ENCODE measurements at regions of chr2 and their contacts with region 1.

Region 1: GRCh38 chr2:74250189-74250631 is 51.8 kb downstream of the MTHFD2 start:
- DNase-seq: no peak
- ATAC-seq: peak; percentile 30
- H3K4me3 ChIP-seq: no peak overlapping the region
- H3K27ac ChIP-seq: no peak overlapping the region
- H3K4me1 ChIP-seq: peaks cover 0 to 6% of the 10 kb centered on the region in 2 donors
- H3K27me3 ChIP-seq: no peaks in the 10 kb centered on the region

Region 2: DNA sequence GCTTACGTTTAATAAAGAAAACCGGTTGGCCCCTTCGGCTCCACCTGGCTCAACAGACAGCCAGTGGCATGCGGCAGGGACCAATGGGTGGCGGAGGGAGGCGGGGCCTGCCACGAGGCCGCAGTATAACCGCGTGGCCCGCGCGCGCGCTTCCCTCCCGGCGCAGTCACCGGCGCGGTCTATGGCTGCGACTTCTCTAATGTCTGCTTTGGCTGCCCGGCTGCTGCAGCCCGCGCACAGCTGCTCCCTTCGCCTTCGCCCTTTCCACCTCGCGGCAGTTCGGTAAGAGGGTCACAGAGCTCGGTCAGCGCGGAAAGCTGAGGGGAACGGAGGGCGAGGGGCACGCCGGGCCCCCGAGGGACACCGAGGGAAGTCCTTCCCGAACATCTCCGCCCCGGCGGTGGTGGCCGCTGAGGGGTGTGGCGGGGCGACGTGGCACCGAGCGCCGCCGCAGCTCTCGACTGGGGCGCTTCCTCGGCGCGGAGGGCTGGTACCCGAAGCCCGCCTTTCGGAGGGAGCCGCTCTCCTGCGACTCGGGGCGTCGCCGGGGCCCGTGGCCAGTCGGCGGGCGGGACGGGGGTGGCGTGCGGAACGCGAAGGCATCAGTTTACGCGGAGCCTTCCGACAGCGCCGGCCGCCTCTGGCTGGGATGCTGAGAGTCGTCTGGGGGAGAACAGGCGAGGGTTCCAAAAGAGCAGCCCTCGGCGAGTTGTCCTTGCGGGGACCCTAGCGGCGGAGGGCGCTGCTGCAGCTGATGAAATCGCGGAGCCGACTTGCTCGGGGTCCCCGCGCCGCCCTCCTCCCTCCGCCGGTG is 51.5 kb before region 1 on chr2 and contains the start of gene MTHFD2:
- intact Hi-C with region 1: loop called in 1 of 2 experiments (anchors 5 kb)
- DNase-seq: peak; percentile 96 to 97
- ATAC-seq: peak; percentile 94
- H3K4me3 ChIP-seq: peak within 1 kb of the TSS; percentile 54 to 70
- H3K27ac ChIP-seq: peak within 1 kb of the TSS; percentile 45 to 92
- H3K4me1 ChIP-seq: no peaks in the 10 kb centered on the region
- H3K27me3 ChIP-seq: no peaks in the 10 kb centered on the region
- total RNA-seq, gene MTHFD2: 55.7 to 119 TPM

Region 3: GRCh38 chr2:74334931-74335333 is 84.7 kb after region 1 on chr2:
- intact Hi-C with region 1: loop called (anchors 5 to 10 kb)
- DNase-seq: peak; percentile 81 to 89
- ATAC-seq: peak; percentile 88
- H3K4me3 ChIP-seq: no peak overlapping the region
- H3K27ac ChIP-seq: no peak overlapping the region
- H3K4me1 ChIP-seq: no peaks in the 10 kb centered on the region
- H3K27me3 ChIP-seq: no peaks in the 10 kb centered on the region